CD4-positive, alpha-beta T cell (primary cell): ENCODE measurements at regions of chr9 and their contacts with region 1.

Region 1: GRCh38 chr9:75142202-75142601 is 53.9 kb downstream of the OSTF1 start:
- DNase-seq: peak in 3 of 14 experiments; percentile 38 to 59 (median 47)
- ATAC-seq: no peak
- H3K4me3 ChIP-seq: no peak overlapping the region
- H3K4me3 Mint-ChIP-seq: peak overlapping the region; percentile 56
- H3K27ac ChIP-seq: peak overlapping the region; percentile 36
- H3K27ac Mint-ChIP-seq: peak overlapping the region; percentile 87
- H3K4me1 ChIP-seq: peaks cover 48% of the 10 kb centered on the region
- H3K4me1 Mint-ChIP-seq: peaks cover 83% of the 10 kb centered on the region
- H3K27me3 ChIP-seq: no peaks in the 10 kb centered on the region
- H3K27me3 Mint-ChIP-seq: no peaks in the 10 kb centered on the region
- CTCF ChIP-seq: no peak

Region 2: DNA sequence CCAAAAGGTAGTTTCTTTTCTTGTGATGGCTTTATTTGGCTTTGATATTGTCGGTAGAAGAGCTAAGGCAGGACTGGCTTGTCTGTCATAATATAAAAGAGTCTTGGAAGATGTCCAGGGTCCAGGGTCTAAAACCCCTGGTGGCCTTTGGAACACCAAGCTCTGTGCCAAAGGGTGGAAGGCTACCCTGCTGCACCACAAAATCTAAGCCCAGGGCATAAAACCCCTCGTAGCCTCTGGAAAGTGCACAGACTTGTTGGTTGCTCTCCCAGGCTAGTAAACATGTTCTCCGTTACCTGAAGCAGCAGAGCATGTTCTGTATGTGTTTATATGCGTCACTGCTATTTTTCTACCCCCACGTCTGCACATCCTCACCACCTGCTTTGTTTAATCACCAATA is 21.6 kb after region 1 on chr9:
- CTCF ChIA-PET with region 1: no interaction called
- POLR2A ChIA-PET with region 1: no interaction called
- intact Hi-C with region 1: no loop called
- DNase-seq: no peak
- ATAC-seq: no peak
- H3K4me3 ChIP-seq: no peak overlapping the region
- H3K4me3 Mint-ChIP-seq: no peak overlapping the region
- H3K27ac ChIP-seq: no peak overlapping the region
- H3K27ac Mint-ChIP-seq: no peak overlapping the region
- H3K4me1 ChIP-seq: no peaks in the 10 kb centered on the region
- H3K4me1 Mint-ChIP-seq: peaks cover 22% of the 10 kb centered on the region
- H3K27me3 ChIP-seq: no peaks in the 10 kb centered on the region
- H3K27me3 Mint-ChIP-seq: no peaks in the 10 kb centered on the region
- CTCF ChIP-seq: no peak

Region 3: GRCh38 chr9:75175395-75175794 is 33.2 kb after region 1 on chr9:
- CTCF ChIA-PET with region 1: no interaction called
- POLR2A ChIA-PET with region 1: interaction called, 4 read pairs
- intact Hi-C with region 1: loop called in 1 of 2 experiments (anchors 5 kb)
- DNase-seq: no peak
- ATAC-seq: no peak
- H3K4me3 ChIP-seq: no peak overlapping the region
- H3K4me3 Mint-ChIP-seq: no peak overlapping the region
- H3K27ac ChIP-seq: no peak overlapping the region
- H3K27ac Mint-ChIP-seq: no peak overlapping the region
- H3K4me1 ChIP-seq: no peaks in the 10 kb centered on the region
- H3K4me1 Mint-ChIP-seq: peaks cover 38% of the 10 kb centered on the region
- H3K27me3 ChIP-seq: no peaks in the 10 kb centered on the region
- H3K27me3 Mint-ChIP-seq: no peaks in the 10 kb centered on the region
- CTCF ChIP-seq: no peak

Region 4: GRCh38 chr9:75728391-75728790 is 586.2 kb after region 1 on chr9:
- CTCF ChIA-PET with region 1: no interaction called
- POLR2A ChIA-PET with region 1: no interaction called
- intact Hi-C with region 1: no loop called
- DNase-seq: no peak
- ATAC-seq: no peak
- H3K4me3 ChIP-seq: no peak overlapping the region
- H3K4me3 Mint-ChIP-seq: no peak overlapping the region
- H3K27ac ChIP-seq: no peak overlapping the region
- H3K27ac Mint-ChIP-seq: no peak overlapping the region
- H3K4me1 ChIP-seq: no peaks in the 10 kb centered on the region
- H3K4me1 Mint-ChIP-seq: no peaks in the 10 kb centered on the region
- H3K27me3 ChIP-seq: peaks cover 0 to 3% of the 10 kb centered on the region in 2 experiments
- H3K27me3 Mint-ChIP-seq: no peaks in the 10 kb centered on the region
- CTCF ChIP-seq: no peak